BJ (cell line): ENCODE measurements at regions of chr16 and their contacts with region 1.

Region 1: DNA sequence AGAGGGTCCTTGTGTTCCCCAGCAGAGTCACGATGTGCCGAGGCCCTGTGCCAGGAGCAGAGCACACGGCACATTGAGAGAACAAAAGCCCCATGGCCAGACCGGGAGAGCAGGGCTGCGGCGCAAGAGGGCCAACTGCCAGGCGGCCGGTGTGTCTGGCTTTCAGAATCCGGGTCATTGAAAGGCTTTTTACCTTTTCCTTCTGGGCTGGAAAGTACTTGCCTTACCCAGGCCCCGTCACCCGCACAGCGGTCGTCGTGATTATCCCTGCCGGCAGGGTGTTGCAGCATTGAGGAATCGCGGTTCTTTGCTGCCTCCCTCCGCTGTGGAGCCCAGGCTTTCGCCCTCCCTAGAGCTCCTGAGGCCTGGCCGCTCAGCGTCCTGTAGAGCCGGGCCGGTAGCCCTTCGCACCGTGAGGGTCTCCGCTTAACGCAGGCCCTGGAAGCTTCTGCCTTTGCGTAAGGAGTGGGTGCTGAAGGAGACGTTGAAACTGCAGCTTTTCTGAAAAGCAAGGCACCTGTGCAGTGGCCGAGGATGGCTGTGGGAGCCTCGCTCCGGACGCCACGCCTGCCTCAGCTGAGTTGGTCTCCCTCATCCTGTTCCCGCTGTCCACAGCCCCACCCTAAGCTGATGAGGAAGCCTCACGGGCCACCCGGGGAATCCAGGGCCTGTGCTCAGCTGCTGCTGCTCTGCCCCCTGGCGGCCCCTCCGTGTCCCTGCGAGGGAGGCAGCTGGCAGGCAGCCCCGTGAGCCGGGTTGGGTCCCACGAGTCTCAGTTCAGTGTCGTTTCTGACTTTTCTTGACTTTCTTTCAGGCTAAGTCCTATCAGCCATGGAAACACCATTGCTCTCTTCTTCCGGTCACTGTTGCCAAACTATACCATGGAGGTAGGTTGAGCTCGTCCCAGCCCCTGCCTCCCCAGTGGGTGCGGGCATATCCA is 8.6 kb upstream of the MC1R start:
- DNase-seq: no peak
- H3K4me3 ChIP-seq: no peak overlapping the region
- H3K27me3 ChIP-seq: no peaks in the 10 kb centered on the region
- CTCF ChIP-seq: peak; percentile 98

Region 2: GRCh38 chr16:89693931-89694783 is 215.9 kb before region 1 on chr16:
- CTCF ChIA-PET with region 1: no interaction called
- POLR2A ChIA-PET with region 1: no interaction called
- DNase-seq: no peak
- H3K4me3 ChIP-seq: no peak overlapping the region
- H3K27me3 ChIP-seq: no peaks in the 10 kb centered on the region
- CTCF ChIP-seq: no peak

Region 3: DNA sequence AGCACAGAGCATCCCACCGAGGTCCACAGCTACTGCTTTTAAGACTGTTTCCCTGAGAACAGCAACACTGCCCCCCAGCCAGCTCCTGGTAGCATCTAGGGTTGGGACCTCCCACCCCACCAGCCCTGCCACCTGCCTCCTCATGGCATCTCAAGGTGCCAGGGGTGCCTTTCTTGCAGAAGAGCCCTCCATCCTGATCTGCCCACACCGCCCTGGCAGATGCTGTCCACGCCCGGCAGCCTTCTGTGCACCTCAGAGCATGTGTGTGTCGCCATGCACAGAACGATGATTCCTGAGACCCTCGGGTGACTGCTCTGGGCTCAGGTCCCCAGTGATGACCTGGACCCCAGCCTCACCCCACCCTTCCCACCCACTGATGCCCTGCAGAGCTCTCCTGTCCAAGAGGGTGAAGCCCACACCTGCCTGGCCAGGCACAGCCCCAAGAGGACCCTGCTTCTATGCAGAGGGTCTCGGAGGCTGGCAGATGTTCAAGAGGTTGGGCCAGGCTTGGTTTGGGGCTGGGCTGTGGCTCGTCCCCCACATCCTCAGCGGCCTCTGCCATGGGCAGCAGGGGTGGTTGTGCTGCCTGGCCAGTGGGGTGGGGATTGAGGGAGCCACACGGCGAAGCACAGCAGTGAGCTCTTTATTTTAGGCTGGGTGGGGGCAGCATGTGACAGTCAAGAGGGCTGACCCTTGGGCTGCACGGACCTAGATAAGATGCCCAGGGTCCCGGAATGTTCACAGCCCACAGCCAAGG is 203.4 kb before region 1 on chr16:
- CTCF ChIA-PET with region 1: interaction called, 13 read pairs
- POLR2A ChIA-PET with region 1: no interaction called
- DNase-seq: no peak
- H3K4me3 ChIP-seq: no peak overlapping the region
- H3K27me3 ChIP-seq: no peaks in the 10 kb centered on the region
- CTCF ChIP-seq: no peak

Region 4: DNA sequence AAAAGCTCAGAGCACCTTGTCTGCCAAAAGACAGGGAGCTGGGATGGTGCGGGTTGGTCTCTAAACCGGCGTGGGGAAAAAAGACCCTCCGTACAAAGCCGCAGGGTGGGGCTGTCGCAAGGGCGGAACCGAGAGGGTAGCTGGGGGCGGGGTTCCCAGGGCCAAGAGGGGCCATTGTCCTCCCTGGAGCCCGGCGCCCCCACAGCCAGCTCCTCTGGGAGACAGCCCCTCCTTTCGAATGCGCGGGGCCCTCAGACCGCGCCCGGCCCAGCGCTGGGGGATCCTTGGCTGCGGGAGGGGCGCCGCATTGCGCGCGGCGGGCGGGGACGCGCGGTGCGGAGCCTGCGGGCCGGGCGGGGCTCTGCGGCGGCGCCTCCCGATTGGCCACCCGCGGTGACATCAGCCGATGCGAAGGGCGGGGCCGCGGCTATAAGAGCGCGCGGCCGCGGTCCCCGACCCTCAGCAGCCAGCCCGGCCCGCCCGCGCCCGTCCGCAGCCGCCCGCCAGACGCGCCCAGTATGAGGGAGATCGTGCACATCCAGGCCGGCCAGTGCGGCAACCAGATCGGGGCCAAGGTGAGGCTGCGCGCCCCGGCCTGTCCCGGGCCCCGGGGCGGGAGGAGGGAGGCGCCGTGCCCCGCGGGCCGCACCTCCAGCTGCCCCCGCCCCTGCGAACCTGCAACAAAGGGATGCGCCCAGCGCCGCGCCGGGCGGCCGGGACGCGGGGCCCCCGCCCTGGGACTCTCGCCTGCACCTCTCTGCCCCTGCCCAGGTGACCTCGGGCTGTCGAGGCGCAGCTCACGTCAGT is 13.0 kb after region 1 on chr16 and contains the start of gene TUBB3:
- CTCF ChIA-PET with region 1: interaction called, 48 read pairs
- POLR2A ChIA-PET with region 1: no interaction called
- DNase-seq: no peak
- H3K4me3 ChIP-seq: peak within 1 kb of the TSS; percentile 65
- H3K27me3 ChIP-seq: no peaks in the 10 kb centered on the region
- CTCF ChIP-seq: no peak
- polyA plus RNA-seq, gene TUBB3: 55.2 and 108 TPM in 2 replicates